Dorsolateral prefrontal cortex (tissue), 120 donors: ENCODE measurements at regions of chr11 and their contacts with region 1.

Region 1: GRCh38 chr11:36702330-36703055 is 104.5 kb upstream of the RAG2 start:
- DNase-seq: peak in 2 of 10 donors; percentile 16 to 30
- H3K4me3 ChIP-seq: peak overlapping the region in 1 of 59 donors; percentile 17
- H3K27ac ChIP-seq: no peak overlapping the region
- H3K27me3 ChIP-seq: no peaks in the 10 kb centered on the region
- CTCF ChIP-seq: peak; percentile 58 to 93 (median 78)

Region 2: GRCh38 chr11:36746886-36747710 is 44.6 kb after region 1 on chr11:
- intact Hi-C with region 1: loop called (anchors 1 to 2 kb)
- DNase-seq: peak; percentile 57 to 85 (median 72)
- H3K4me3 ChIP-seq: no peak overlapping the region
- H3K27ac ChIP-seq: no peak overlapping the region
- H3K27me3 ChIP-seq: peaks cover 0 to 6% (median 0%) of the 10 kb centered on the region in 45 donors
- CTCF ChIP-seq: peak; percentile 77 to 99 (median 96)